ENCODE measurements at regions of chr9 and their contacts with region 1.

Region 1: DNA sequence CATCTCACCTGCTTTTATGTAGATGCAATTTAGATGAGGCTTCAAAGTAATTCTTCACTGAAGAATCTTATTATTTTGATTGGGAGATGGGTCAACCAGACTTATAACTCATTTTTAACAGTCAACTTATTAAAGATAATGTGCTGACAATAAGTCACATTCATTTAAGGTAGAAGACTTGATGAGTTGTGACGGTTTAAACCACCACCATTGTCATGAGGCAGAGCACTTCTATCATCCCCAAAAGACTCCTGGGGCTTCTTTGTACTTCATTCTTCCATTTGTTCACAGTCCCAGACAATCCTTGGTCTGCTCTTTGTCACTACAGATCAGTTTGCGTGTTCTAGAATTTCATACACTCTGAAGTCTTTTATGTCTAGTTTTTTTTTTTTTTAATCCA is 346.1 kb downstream of the RASEF start:
- DNase-seq: no peak
- H3K4me3 ChIP-seq: no peak overlapping the region
- H3K27ac ChIP-seq: no peak overlapping the region
- H3K4me1 ChIP-seq: peaks cover 0 to 7% (median 0%) of the 10 kb centered on the region in 6 donors
- H3K27me3 ChIP-seq: no peaks in the 10 kb centered on the region
- CTCF ChIP-seq: no peak
- POLR2A ChIP-seq: no peak

Region 2: DNA sequence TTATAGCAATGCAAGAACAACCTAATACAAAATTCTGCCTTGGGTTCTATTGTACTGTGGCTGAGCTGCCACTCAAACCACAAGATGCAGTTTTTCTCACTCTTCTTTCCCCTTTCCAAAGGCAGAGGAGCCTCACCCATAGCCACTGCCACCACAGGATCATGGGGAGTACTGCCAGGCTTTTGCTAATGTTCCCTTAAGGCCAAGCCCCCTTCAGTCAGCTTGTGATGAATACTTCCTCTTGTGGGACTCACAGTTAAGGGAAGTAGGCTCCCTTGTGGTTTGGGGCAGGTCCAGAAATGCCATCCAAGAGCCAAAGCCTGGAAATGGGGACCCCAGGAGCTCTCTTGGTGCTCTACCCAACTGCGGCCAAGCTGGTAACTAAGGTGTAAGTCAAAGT is 469.5 kb before region 1 on chr9:
- intact Hi-C with region 1: no loop called
- DNase-seq: no peak
- H3K4me3 ChIP-seq: no peak overlapping the region
- H3K27ac ChIP-seq: no peak overlapping the region
- H3K4me1 ChIP-seq: peaks cover 0 to 6% (median 0%) of the 10 kb centered on the region in 6 donors
- H3K27me3 ChIP-seq: no peaks in the 10 kb centered on the region
- CTCF ChIP-seq: no peak
- POLR2A ChIP-seq: no peak

Region 3: DNA sequence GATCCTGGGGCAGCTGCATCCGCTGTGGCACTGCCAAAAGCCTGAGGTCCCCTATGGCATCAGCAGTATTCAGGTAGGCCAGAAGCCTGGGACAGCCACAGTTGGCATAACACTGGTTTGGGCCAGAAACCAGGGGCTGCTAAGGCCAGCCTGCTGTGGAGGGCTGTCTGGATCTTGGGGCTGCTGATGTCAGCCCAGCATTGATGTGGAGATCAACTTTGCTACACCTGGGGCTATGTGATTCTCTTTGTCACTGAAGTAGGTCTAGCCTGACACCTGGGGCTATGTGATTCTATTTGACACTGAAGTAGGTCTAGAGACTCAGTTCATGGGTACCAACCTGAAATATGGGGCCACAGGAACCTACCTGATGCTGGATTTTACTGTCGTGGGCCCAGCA is 65.3 kb before region 1 on chr9:
- intact Hi-C with region 1: loop called (anchors 10 kb)
- DNase-seq: peak; percentile 37
- H3K4me3 ChIP-seq: no peak overlapping the region
- H3K27ac ChIP-seq: no peak overlapping the region
- H3K4me1 ChIP-seq: no peaks in the 10 kb centered on the region
- H3K27me3 ChIP-seq: no peaks in the 10 kb centered on the region
- CTCF ChIP-seq: no peak
- POLR2A ChIP-seq: no peak